ENCODE measurements at regions of chr14 and their contacts with region 1.

Region 1: DNA sequence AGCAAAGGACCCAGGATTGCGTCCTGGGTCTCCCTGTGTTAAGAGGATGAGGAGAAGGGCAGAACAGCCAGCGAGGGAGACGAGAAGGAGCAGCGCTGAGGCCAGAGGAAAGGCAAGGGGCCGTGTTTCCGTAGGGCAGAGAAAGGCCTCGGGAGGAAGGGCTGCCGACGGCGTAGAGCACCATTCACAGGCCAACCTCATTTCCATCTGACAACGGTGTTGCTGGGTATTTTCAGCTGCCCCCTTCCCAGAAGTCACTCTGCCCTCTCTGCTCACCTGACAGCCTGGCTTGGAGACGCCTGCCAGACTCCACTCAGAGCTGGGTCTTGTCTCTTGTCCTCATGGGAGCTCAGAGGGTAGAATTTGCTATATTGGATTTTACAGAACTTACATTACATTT is 51.4 kb downstream of the GPR68 start:
- DNase-seq: no peak
- ATAC-seq: no peak
- H3K4me3 ChIP-seq: no peak overlapping the region
- H3K4me3 Mint-ChIP-seq: no peak overlapping the region
- H3K27ac ChIP-seq: no peak overlapping the region
- H3K27ac Mint-ChIP-seq: no peak overlapping the region
- H3K4me1 ChIP-seq: peaks cover 5 to 18% of the 10 kb centered on the region in 2 experiments
- H3K4me1 Mint-ChIP-seq: peaks cover 19 to 32% (median 20%) of the 10 kb centered on the region in 3 donors
- H3K27me3 ChIP-seq: no peaks in the 10 kb centered on the region
- H3K27me3 Mint-ChIP-seq: no peaks in the 10 kb centered on the region

Region 2: GRCh38 chr14:89912667-89913211 is 1280.3 kb before region 1 on chr14:
- CTCF ChIA-PET with region 1: interaction called in 1 of 2 experiments, 13 read pairs
- POLR2A ChIA-PET with region 1: no interaction called
- DNase-seq: no peak
- ATAC-seq: no peak
- H3K4me3 ChIP-seq: no peak overlapping the region
- H3K4me3 Mint-ChIP-seq: no peak overlapping the region
- H3K27ac ChIP-seq: no peak overlapping the region
- H3K27ac Mint-ChIP-seq: no peak overlapping the region
- H3K4me1 ChIP-seq: peaks cover 0 to 2% of the 10 kb centered on the region in 2 experiments
- H3K4me1 Mint-ChIP-seq: peaks cover 0 to 3% (median 3%) of the 10 kb centered on the region in 3 donors
- H3K27me3 ChIP-seq: no peaks in the 10 kb centered on the region
- H3K27me3 Mint-ChIP-seq: peaks cover 4 to 20% of the 10 kb centered on the region in 2 donors

Region 3: DNA sequence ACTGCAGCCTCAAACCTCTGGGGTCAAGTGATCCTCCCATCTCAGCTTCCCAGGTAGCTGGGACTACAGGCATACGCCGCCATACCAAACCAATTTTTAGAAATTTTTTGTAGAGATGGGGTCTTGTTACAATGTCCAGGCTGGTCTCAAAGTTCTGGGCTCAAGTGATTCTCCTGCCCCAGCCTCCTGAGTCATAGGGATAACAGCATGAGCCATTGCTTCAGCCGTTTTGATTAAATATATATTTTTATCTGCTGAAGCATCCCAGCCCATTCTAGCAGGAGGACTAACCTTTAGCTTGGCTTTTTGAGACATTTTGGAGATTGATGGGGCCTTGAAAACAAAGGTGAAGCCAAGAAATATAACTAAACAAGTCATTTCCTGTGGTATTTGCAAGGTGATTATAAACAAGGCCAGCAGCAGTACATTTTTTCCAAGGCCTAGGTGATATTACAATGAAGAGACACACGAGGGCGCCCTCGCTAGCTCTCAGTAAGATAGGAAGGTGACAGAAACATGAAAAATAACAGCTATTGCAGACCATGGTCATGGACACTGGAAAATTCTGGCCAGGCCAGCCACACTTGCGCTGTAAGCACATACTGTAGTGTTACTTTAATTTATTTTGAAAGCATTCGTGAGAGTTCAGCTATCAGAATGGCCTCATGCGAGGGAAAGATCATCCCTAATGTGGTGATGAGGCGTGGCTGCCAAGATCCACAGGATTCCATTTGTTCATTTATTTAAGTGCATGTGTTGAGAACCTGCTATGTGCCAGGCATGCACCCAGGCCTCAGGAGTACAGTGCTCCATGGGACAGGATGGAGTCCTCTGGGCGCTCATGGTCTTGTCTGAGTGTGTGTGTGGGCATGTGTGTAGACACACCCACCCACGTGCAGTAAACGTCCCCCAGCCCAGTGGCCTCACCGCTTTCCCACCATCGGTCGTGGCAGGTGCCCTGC is 15.7 kb before region 1 on chr14:
- CTCF ChIA-PET with region 1: interaction called, 4 to 10 read pairs
- POLR2A ChIA-PET with region 1: no interaction called
- DNase-seq: peak; percentile 40 to 89 (median 63)
- ATAC-seq: peak; percentile 77 to 88 (median 87)
- H3K4me3 ChIP-seq: no peak overlapping the region
- H3K4me3 Mint-ChIP-seq: no peak overlapping the region
- H3K27ac ChIP-seq: peak overlapping the region; percentile 67
- H3K27ac Mint-ChIP-seq: peak overlapping the region; percentile 92 to 94
- H3K4me1 ChIP-seq: peaks cover 0 to 11% of the 10 kb centered on the region in 2 experiments
- H3K4me1 Mint-ChIP-seq: peaks cover 12 to 17% (median 13%) of the 10 kb centered on the region in 3 donors
- H3K27me3 ChIP-seq: no peaks in the 10 kb centered on the region
- H3K27me3 Mint-ChIP-seq: no peaks in the 10 kb centered on the region

Measured in T-cell (primary cell).